MCF 10A (cell line): ENCODE measurements at regions of chr3 and their contacts with region 1.

Region 1: GRCh38 chr3:122383771-122384697 is at the start of gene FAM162A:
- DNase-seq: peak; percentile 93
- H3K4me3 Mint-ChIP-seq: peak within 1 kb of the TSS; percentile 98
- H3K27ac Mint-ChIP-seq: peak within 1 kb of the TSS; percentile 97
- H3K4me1 Mint-ChIP-seq: peaks cover 22% of the 10 kb centered on the region
- H3K27me3 Mint-ChIP-seq: no peaks in the 10 kb centered on the region
- CTCF ChIP-seq: peak; percentile 22
- total RNA-seq, gene FAM162A: 50.6 and 59.1 TPM in 2 replicates

Region 2: DNA sequence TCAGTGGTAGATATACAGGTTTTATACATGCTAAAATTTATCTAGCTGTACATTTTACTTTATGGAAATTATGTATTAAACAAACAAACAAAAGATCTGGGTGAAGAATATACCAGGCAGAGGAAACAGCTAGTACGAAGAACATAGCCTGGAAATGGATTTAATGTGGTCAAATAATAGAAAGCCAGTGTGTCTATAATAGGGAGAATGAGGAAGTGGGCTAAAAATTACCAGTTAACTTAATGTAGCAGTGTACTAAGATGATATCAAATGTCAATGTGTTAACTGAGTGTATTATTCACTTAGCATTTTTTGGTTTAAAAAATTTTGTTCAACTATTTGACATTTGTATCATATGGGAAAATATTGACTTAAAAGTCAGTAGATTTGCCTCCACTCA is 512.6 kb before region 1 on chr3:
- CTCF ChIA-PET with region 1: no interaction called
- POLR2A ChIA-PET with region 1: no interaction called
- intact Hi-C with region 1: no loop called
- DNase-seq: no peak
- H3K4me3 Mint-ChIP-seq: no peak overlapping the region
- H3K27ac Mint-ChIP-seq: no peak overlapping the region
- H3K4me1 Mint-ChIP-seq: no peaks in the 10 kb centered on the region
- H3K27me3 Mint-ChIP-seq: no peaks in the 10 kb centered on the region
- CTCF ChIP-seq: no peak

Region 3: GRCh38 chr3:122314228-122314876 is 69.7 kb before region 1 on chr3:
- CTCF ChIA-PET with region 1: interaction called, 8 read pairs
- POLR2A ChIA-PET with region 1: interaction called, 34 read pairs
- intact Hi-C with region 1: no loop called
- DNase-seq: peak; percentile 61
- H3K4me3 Mint-ChIP-seq: no peak overlapping the region
- H3K27ac Mint-ChIP-seq: peak overlapping the region; percentile 78
- H3K4me1 Mint-ChIP-seq: peaks cover 19% of the 10 kb centered on the region
- H3K27me3 Mint-ChIP-seq: no peaks in the 10 kb centered on the region
- CTCF ChIP-seq: no peak

Region 4: GRCh38 chr3:122322095-122323075 is 61.6 kb before region 1 on chr3:
- CTCF ChIA-PET with region 1: interaction called, 6 read pairs
- POLR2A ChIA-PET with region 1: interaction called, 47 read pairs
- intact Hi-C with region 1: no loop called
- DNase-seq: no peak
- H3K4me3 Mint-ChIP-seq: no peak overlapping the region
- H3K27ac Mint-ChIP-seq: no peak overlapping the region
- H3K4me1 Mint-ChIP-seq: peaks cover 10% of the 10 kb centered on the region
- H3K27me3 Mint-ChIP-seq: no peaks in the 10 kb centered on the region
- CTCF ChIP-seq: no peak

Region 5: GRCh38 chr3:122350814-122351418 is 33.1 kb before region 1 on chr3:
- CTCF ChIA-PET with region 1: interaction called, 7 read pairs
- POLR2A ChIA-PET with region 1: interaction called, 28 read pairs
- intact Hi-C with region 1: no loop called
- DNase-seq: peak; percentile 53
- H3K4me3 Mint-ChIP-seq: no peak overlapping the region
- H3K27ac Mint-ChIP-seq: peak overlapping the region; percentile 70
- H3K4me1 Mint-ChIP-seq: peaks cover 26% of the 10 kb centered on the region
- H3K27me3 Mint-ChIP-seq: no peaks in the 10 kb centered on the region
- CTCF ChIP-seq: no peak

Region 6: GRCh38 chr3:122365073-122365472 is 19.0 kb before region 1 on chr3:
- CTCF ChIA-PET with region 1: interaction called, 8 read pairs
- POLR2A ChIA-PET with region 1: interaction called, 61 read pairs
- intact Hi-C with region 1: no loop called
- DNase-seq: no peak
- H3K4me3 Mint-ChIP-seq: no peak overlapping the region
- H3K27ac Mint-ChIP-seq: no peak overlapping the region
- H3K4me1 Mint-ChIP-seq: no peaks in the 10 kb centered on the region
- H3K27me3 Mint-ChIP-seq: no peaks in the 10 kb centered on the region
- CTCF ChIP-seq: no peak

Region 7: DNA sequence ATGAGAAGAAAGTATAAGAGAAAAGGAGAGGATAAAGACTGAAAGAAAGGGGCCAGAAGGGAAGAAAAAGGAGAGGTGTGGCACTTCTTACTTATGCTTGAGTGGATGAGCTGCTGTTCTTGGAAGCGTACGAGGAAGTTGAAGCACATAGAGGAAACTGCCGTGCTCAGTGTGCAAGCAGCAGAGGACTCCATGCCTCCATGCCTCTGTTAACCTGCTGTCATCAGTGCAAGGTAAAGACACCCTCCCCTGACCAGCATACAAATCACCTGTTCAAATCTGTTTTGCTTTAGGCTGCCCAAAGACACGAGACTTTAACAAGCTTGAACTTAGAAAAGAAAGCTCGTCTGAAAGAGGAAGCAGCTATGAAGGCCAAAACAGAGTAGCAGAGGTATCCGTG is 25.4 kb after region 1 on chr3:
- CTCF ChIA-PET with region 1: interaction called, 4 read pairs
- POLR2A ChIA-PET with region 1: interaction called, 91 read pairs
- intact Hi-C with region 1: no loop called
- DNase-seq: no peak
- H3K4me3 Mint-ChIP-seq: no peak overlapping the region
- H3K27ac Mint-ChIP-seq: no peak overlapping the region
- H3K4me1 Mint-ChIP-seq: peaks cover 24% of the 10 kb centered on the region
- H3K27me3 Mint-ChIP-seq: no peaks in the 10 kb centered on the region
- CTCF ChIP-seq: no peak

Region 8: DNA sequence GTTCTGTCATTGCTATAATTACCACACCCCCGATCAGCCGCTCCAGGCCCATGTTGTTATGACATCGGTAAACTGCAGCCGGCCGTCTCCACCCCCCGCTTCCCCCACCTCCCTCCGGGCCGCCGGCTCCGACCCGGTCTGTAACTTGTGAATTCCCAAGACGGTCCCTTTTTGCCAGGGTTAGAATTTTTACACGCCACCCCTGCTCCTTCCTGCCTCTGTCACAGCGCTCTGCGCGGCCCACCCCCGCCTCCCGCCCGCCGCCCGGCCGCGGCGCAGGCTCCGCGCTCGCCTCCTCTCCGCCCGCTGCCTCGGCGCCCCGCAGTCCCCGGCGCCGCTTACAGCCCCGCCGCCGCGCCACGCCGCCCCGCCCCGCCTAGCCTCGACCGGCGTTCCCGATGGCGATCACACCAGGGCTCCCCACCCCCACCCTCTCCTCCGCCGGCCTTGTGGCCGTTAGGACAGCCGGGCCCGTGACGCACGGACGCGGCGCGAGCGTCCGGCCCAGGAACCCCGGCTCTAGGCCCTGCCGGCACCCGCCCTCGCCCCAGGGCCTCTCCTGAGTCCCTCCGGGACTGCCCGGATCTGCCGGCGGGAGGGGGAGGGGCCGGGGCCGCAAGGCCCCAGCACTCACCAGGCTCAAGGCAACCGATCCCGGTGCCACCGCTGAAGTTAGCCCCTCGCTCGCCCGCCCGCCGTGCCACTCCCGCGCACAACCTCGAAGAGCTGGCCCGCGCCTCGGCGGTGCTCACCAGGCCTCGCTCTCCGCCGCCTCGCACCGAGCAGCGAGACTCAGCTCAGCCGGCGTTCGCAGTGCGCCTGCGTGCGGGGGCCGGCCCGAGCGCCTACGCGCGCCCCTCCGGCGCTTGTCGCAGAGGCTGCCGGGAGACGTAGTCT is 130.3 kb after region 1 on chr3 and contains the start of gene KPNA1:
- CTCF ChIA-PET with region 1: no interaction called
- POLR2A ChIA-PET with region 1: interaction called, 13 read pairs
- intact Hi-C with region 1: no loop called
- DNase-seq: peak; percentile 88
- H3K4me3 Mint-ChIP-seq: peak within 1 kb of the TSS; percentile 81
- H3K27ac Mint-ChIP-seq: peak within 1 kb of the TSS; percentile 84
- H3K4me1 Mint-ChIP-seq: peaks cover 34% of the 10 kb centered on the region
- H3K27me3 Mint-ChIP-seq: no peaks in the 10 kb centered on the region
- CTCF ChIP-seq: no peak
- total RNA-seq, gene KPNA1: 101 and 104 TPM in 2 replicates